CD4-positive, alpha-beta memory T cell (primary cell): ENCODE measurements at regions of chr2 and their contacts with region 1.

Region 1: DNA sequence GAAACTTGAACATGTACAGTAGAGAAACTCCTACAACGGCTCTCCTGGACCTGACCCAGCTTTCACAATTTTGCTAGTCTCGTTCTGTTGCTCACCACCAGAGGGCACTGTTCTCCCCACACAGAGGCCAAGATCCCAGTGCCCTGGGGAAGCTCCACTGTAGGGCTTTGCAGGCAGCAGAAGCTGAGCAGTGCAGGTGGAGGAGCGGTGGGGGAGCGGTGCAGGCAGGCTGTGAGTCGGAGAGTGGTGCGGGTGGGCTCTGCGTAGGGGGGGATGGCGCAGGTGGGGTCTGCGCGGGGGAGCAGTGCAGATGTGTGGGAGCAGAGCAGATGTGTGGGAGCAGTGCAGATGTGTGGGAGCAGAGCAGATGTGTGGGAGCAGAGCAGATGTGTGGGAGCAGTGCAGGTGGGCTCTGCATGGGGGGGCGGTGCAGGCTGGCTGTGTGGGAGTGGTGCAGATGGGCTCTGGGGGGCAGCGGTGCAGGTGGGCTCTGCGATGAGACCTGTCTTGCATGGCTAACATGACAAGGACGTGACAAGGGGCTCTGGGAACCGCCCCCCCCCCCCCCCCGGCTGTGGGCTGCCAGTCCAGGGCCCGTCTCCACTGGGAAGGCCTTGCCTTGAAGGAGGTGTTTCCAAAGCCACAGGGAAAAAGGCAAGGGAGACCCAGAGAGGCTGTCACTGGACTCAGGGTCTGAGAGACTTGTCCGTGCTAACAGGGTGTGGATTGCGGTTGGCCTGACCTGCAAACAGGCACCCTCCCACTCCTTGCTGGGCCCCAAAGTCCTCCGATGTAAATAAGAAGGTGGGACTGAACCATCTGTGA is 7.3 kb downstream of the CYS1 start:
- DNase-seq: peak; percentile 77 to 81 (median 79)
- H3K4me3 ChIP-seq: no peak overlapping the region
- H3K4me3 Mint-ChIP-seq: no peak overlapping the region
- H3K27ac ChIP-seq: no peak overlapping the region
- H3K27ac Mint-ChIP-seq: no peak overlapping the region
- H3K4me1 ChIP-seq: no peaks in the 10 kb centered on the region
- H3K4me1 Mint-ChIP-seq: peaks cover 3 to 7% (median 4%) of the 10 kb centered on the region in 4 donors
- H3K27me3 ChIP-seq: peaks cover 2% of the 10 kb centered on the region
- H3K27me3 Mint-ChIP-seq: peaks cover 27 to 35% of the 10 kb centered on the region in 2 donors

Region 2: DNA sequence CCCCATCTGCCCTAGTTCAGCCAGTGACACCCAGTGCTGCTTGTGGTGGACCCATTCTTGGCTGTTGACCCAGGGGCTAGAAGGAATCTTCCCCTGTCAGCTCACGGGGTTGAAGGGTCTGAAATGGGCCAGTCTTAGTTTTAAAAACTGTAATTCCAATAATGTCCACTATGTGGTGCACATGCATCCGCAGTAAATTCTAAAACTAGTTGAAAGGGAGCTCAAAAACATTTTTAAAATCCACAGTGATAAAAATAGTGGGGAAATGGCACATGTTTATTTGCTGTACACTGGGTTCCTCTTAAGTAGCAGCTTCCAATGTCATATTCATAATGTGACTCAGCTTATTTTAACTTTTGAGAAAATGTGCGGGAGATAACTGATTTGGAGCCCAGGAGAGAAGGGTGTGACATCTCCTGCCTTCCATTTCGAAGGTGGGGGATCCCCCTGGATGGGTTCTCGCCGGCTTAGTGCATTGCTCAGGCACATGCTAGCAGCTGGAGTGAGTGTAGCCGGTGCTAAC is 88.6 kb before region 1 on chr2:
- CTCF ChIA-PET with region 1: interaction called, 15 read pairs
- POLR2A ChIA-PET with region 1: no interaction called
- intact Hi-C with region 1: no loop called
- DNase-seq: peak in 4 of 5 donors; percentile 54 to 60 (median 59)
- H3K4me3 ChIP-seq: no peak overlapping the region
- H3K4me3 Mint-ChIP-seq: peak overlapping the region in 1 of 8 donors; percentile 1
- H3K27ac ChIP-seq: no peak overlapping the region
- H3K27ac Mint-ChIP-seq: peak overlapping the region in 1 of 7 donors; percentile 73
- H3K4me1 ChIP-seq: peaks cover 14% of the 10 kb centered on the region
- H3K4me1 Mint-ChIP-seq: peaks cover 10 to 14% (median 11%) of the 10 kb centered on the region in 4 donors
- H3K27me3 ChIP-seq: no peaks in the 10 kb centered on the region
- H3K27me3 Mint-ChIP-seq: peaks cover 0 to 2% of the 10 kb centered on the region in 2 donors

Region 3: DNA sequence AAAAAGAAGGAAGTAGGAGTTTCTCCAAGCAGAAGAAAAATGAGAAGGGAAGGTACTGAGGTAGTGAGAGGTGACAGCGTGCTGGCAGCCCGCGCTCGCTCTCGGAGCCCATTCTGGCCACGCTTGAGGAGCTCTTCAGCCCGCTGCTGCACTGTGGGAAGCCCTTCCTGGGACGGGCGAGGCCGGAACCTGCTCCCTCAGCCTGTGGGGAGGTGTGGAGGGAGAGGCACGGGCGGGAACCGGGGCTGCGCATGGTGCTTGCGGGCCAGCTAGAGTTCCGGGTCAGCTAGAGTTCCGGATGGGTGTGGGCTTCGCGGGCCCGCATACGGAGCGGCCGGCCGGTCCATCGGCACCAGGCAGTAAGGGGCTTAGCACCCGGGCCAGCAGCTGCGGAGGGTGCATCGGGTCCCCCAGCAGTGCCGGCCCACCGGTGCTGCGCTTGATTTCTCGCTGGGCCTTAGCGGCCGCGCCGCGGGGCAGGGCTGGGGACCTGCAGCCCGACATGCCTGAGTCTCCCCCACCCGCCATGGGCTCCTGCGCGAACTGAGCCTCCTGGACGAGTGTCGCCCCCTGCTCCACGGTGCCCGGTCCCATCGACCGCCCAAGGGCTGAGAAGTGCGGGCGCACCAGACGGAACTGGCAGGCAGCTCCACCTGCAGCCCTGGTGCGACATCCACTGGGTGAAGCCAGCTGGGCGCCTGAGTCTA is 18.5 kb after region 1 on chr2:
- CTCF ChIA-PET with region 1: interaction called, 125 read pairs
- POLR2A ChIA-PET with region 1: no interaction called
- intact Hi-C with region 1: no loop called
- DNase-seq: peak in 2 of 5 donors; percentile 11 to 47
- H3K4me3 ChIP-seq: no peak overlapping the region
- H3K4me3 Mint-ChIP-seq: peak overlapping the region in 7 of 8 donors; percentile 70 to 86 (median 78)
- H3K27ac ChIP-seq: no peak overlapping the region
- H3K27ac Mint-ChIP-seq: no peak overlapping the region
- H3K4me1 ChIP-seq: no peaks in the 10 kb centered on the region
- H3K4me1 Mint-ChIP-seq: peaks cover 1 to 14% (median 7%) of the 10 kb centered on the region in 4 donors
- H3K27me3 ChIP-seq: peaks cover 19% of the 10 kb centered on the region
- H3K27me3 Mint-ChIP-seq: peaks cover 23 to 63% of the 10 kb centered on the region in 2 donors

Region 4: GRCh38 chr2:10097352-10098148 is 24.7 kb after region 1 on chr2:
- CTCF ChIA-PET with region 1: interaction called, 125 read pairs
- POLR2A ChIA-PET with region 1: interaction called, 4 read pairs
- intact Hi-C with region 1: loop called (anchors 1 kb)
- DNase-seq: peak in 2 of 5 donors; percentile 30 to 31
- H3K4me3 ChIP-seq: no peak overlapping the region
- H3K4me3 Mint-ChIP-seq: no peak overlapping the region
- H3K27ac ChIP-seq: no peak overlapping the region
- H3K27ac Mint-ChIP-seq: no peak overlapping the region
- H3K4me1 ChIP-seq: no peaks in the 10 kb centered on the region
- H3K4me1 Mint-ChIP-seq: peaks cover 0 to 8% (median 1%) of the 10 kb centered on the region in 4 donors
- H3K27me3 ChIP-seq: peaks cover 7% of the 10 kb centered on the region
- H3K27me3 Mint-ChIP-seq: peaks cover 17 to 34% of the 10 kb centered on the region in 2 donors

Region 5: DNA sequence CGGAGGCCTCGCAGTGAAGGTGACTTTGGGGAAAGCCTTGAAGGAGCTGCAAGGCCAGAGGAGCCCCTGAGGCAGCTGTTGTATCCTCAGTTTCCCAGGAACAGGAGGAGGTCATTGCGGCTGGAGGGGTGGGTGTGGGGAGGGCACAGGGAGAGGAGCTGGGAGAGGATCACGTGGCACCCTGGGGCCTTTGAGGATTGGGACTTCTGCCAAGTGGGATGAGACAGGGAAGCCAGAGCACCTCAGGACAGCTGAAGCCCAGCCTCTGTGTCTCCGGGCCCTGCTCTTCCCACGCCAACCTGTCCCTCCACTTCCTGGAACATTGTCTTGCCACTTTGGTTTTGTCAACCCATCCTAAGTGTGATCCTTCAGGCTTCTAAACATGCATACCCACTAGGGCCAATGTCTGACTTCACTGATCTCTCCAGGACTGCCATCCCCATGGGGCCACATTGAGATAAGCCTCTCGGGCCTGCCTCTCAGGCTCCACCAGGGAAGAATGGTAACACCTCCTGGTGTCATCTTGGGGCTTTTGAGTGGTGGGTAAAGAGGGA is 30.4 kb after region 1 on chr2:
- CTCF ChIA-PET with region 1: interaction called, 125 read pairs
- POLR2A ChIA-PET with region 1: no interaction called
- intact Hi-C with region 1: no loop called
- DNase-seq: no peak
- H3K4me3 ChIP-seq: no peak overlapping the region
- H3K4me3 Mint-ChIP-seq: no peak overlapping the region
- H3K27ac ChIP-seq: no peak overlapping the region
- H3K27ac Mint-ChIP-seq: no peak overlapping the region
- H3K4me1 ChIP-seq: no peaks in the 10 kb centered on the region
- H3K4me1 Mint-ChIP-seq: no peaks in the 10 kb centered on the region
- H3K27me3 ChIP-seq: no peaks in the 10 kb centered on the region
- H3K27me3 Mint-ChIP-seq: peaks cover 2 to 4% of the 10 kb centered on the region in 2 donors

Region 6: DNA sequence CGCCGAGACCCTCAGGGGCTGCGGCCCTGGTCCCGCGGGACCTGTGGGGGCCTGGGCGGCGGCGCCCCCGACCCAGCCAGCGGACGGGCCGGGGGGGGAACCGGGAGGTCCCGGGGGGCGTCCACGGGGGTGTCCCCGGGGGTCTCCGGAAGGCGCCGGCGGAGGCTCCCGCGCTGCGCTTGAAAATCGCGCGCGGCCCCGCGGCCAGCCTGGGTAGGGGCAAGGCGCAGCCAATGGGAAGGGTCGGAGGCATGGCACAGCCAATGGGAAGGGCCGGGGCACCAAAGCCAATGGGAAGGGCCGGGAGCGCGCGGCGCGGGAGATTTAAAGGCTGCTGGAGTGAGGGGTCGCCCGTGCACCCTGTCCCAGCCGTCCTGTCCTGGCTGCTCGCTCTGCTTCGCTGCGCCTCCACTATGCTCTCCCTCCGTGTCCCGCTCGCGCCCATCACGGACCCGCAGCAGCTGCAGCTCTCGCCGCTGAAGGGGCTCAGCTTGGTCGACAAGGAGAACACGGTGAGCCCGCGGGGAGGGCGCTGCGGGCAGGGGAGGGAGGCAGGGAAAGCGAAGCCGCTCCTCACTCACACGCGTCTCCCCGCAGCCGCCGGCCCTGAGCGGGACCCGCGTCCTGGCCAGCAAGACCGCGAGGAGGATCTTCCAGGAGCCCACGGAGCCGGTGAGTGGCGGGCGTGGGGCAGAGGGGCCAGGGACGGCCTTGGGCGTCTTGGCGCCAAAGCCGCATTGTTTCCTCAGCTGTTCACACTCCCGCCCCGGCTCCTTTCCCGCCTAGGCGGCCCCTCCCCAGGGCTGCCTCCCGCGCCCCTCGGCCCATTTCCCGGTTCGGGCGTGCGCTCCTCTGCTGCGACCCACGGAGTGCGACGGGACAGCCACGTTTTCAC is 49.8 kb after region 1 on chr2 and contains the start of gene RRM2:
- CTCF ChIA-PET with region 1: interaction called, 15 read pairs
- POLR2A ChIA-PET with region 1: interaction called, 3 read pairs
- intact Hi-C with region 1: loop called (anchors 1 kb)
- DNase-seq: peak; percentile 81 to 87 (median 85)
- H3K4me3 ChIP-seq: peak within 1 kb of the TSS; percentile 32 to 50
- H3K4me3 Mint-ChIP-seq: peak within 1 kb of the TSS; percentile 89 to 99 (median 98)
- H3K27ac ChIP-seq: no peak within 1 kb of the TSS
- H3K27ac Mint-ChIP-seq: peak within 1 kb of the TSS; percentile 51 to 91 (median 58)
- H3K4me1 ChIP-seq: peaks cover 52% of the 10 kb centered on the region
- H3K4me1 Mint-ChIP-seq: peaks cover 32 to 56% (median 42%) of the 10 kb centered on the region in 4 donors
- H3K27me3 ChIP-seq: peaks cover 5% of the 10 kb centered on the region
- H3K27me3 Mint-ChIP-seq: peaks cover 5 to 12% of the 10 kb centered on the region in 2 donors
- total RNA-seq, gene RRM2: 0.42 TPM in 1 of 2 experiments, not detected in the other

Region 7: DNA sequence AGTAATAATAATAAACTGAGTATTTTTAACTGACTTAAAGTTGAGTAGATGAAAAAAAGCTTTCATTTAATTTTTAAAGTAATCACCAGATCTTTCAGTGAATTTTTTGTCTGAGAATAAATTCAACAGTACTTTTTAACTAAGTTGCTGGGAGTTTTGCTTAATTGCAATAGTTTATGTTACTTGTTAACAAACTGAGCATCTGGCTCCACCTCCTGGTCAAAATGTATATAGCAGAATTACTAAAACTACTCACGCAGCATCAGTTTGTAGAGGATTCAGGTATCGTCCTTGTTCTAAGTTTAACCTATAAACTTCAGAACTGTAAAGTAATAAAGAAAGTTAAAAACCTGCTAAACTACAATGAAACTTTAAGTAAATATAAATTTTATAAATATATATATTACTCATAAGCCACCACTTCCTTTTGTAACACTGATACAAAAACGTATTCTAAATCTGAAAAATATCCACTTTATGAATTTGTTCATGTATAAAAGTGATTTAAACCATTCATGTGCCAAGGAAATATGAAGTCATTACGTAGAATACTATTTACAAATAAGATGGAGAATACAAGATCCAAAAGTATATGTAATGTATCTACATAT is 595.6 kb after region 1 on chr2:
- CTCF ChIA-PET with region 1: no interaction called
- POLR2A ChIA-PET with region 1: no interaction called
- intact Hi-C with region 1: loop called (anchors 1 kb)
- DNase-seq: peak; percentile 43 to 63 (median 60)
- H3K4me3 ChIP-seq: no peak overlapping the region
- H3K4me3 Mint-ChIP-seq: no peak overlapping the region
- H3K27ac ChIP-seq: no peak overlapping the region
- H3K27ac Mint-ChIP-seq: no peak overlapping the region
- H3K4me1 ChIP-seq: no peaks in the 10 kb centered on the region
- H3K4me1 Mint-ChIP-seq: peaks cover 0 to 4% (median under 1%) of the 10 kb centered on the region in 4 donors
- H3K27me3 ChIP-seq: no peaks in the 10 kb centered on the region
- H3K27me3 Mint-ChIP-seq: no peaks in the 10 kb centered on the region

Region 8: GRCh38 chr2:11688222-11689069 is 1615.6 kb after region 1 on chr2:
- CTCF ChIA-PET with region 1: no interaction called
- POLR2A ChIA-PET with region 1: no interaction called
- intact Hi-C with region 1: no loop called
- DNase-seq: peak; percentile 69 to 75 (median 74)
- H3K4me3 ChIP-seq: no peak overlapping the region
- H3K4me3 Mint-ChIP-seq: peak overlapping the region in 7 of 8 donors; percentile 14 to 69 (median 51)
- H3K27ac ChIP-seq: no peak overlapping the region
- H3K27ac Mint-ChIP-seq: peak overlapping the region in 4 of 7 donors; percentile 13 to 74 (median 18)
- H3K4me1 ChIP-seq: peaks cover 11% of the 10 kb centered on the region
- H3K4me1 Mint-ChIP-seq: peaks cover 5 to 10% (median 9%) of the 10 kb centered on the region in 4 donors
- H3K27me3 ChIP-seq: no peaks in the 10 kb centered on the region
- H3K27me3 Mint-ChIP-seq: peaks cover 3 to 8% of the 10 kb centered on the region in 2 donors